IMR-90 (cell line): ENCODE measurements at regions of chr14 and their contacts with region 1.

Region 1: GRCh38 chr14:102474934-102475333 is 34.6 kb downstream of the ANKRD9 start:
- DNase-seq: peak; percentile 80
- ATAC-seq: peak; percentile 84
- H3K4me3 ChIP-seq: no peak overlapping the region
- H3K27ac ChIP-seq: no peak overlapping the region
- H3K4me1 ChIP-seq: peaks cover 14% of the 10 kb centered on the region
- H3K27me3 ChIP-seq: no peaks in the 10 kb centered on the region
- CTCF ChIP-seq: no peak
- POLR2A ChIP-seq: no peak
- RAD21 ChIP-seq: no peak

Region 2: DNA sequence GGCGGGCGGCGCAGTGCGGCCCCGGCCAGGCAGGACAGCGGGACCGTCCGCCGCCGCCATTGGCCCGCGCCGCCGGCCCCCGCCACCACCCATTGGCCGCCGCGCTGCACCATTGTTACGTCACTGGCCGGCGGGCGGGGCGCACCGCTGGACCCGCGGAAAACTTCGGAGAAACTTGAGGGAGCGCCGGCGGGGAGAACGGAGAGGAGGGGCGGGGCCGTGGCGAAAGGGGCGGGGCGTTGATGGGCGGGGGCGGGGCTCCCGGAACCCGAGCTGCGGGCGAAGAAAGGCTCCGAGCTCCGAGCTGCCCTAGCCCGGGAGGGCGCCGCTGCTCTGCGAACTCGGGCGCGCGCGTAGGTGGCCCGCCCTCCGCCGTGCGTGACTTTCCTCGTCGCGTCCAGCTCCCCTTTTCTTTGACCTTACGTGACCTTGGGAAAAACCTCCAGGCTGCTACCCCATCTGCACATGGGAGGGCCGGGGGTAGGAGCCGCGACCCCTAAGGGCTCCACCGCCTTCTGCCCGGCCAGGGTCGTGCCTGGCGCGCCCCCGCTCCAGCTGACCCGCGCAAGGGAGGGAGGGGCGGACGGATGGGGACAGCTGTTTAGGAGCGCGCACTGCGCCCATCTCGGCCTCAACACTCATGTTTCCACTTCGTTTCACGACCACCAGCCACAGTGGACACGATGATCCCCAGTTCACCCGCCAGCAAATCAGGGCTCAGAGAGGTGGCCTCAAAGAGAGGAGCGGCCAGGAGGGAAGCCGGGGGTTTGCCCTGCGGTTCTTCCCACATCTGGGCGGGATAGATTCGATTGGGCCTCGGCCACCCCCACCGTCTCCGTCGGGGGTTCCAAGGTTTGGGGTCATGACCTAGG is 35.0 kb after region 1 on chr14 and contains the start of gene ANKRD9:
- CTCF ChIA-PET with region 1: no interaction called
- POLR2A ChIA-PET with region 1: no interaction called
- dilution Hi-C with region 1: no loop called
- in situ Hi-C with region 1: no loop called
- intact Hi-C with region 1: loop called (anchors 2 kb)
- DNase-seq: peak; percentile 89
- ATAC-seq: peak; percentile 96
- H3K4me3 ChIP-seq: peak within 1 kb of the TSS; percentile 76
- H3K27ac ChIP-seq: peak within 1 kb of the TSS; percentile 72
- H3K4me1 ChIP-seq: peaks cover 8% of the 10 kb centered on the region
- H3K27me3 ChIP-seq: no peaks in the 10 kb centered on the region
- CTCF ChIP-seq: no peak
- POLR2A ChIP-seq: no peak; the same call in 1 of the 2 replicates
- RAD21 ChIP-seq: no peak
- total RNA-seq, gene ANKRD9: 3.9 and 5.3 TPM in 2 replicates